CD4-positive, alpha-beta memory T cell (primary cell): ENCODE measurements at regions of chr19 and their contacts with region 1.

Region 1: DNA sequence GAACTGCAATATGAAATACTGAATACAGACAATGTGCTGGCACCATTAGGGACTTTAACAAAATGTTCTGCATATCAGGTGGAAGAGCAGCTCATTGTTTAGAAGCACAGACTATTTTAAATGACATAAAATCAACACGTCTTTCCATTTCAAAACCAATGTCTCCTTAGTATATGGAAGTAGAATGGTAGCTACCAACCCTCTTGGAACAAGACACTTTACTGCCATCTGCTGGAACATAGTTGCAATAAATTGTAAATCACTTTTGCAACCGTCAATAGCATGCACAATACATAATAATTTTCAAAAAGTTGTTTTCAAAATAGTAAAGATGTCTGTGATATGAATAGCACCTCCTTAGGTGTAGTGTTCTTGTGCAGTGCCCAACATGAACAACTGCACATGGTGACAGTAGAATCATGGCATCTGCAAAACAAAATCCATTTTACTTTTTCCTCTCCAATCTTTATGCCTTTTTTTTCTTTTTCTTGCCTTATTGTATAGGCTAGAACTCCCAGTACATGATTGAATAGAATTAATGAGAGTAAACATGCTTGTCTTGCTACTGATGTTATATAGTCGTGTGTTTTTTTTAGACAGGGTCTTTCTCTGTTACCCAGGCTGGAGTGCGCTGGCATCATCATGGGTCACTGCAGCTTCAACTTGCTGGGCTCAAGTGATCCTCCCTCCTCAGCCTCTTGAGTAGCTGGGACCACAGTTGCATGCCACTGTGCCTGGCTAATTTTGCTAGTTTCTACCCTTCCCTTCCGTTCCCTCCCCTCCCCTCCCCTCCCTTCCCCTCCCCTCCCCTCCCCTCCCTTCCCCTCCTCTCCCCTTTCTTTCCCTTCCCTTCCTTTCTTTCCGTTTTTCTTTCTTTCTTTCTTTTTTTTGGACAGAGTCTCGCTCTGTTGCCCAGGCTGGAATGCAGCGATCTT is 7.8 kb upstream of the LYPD5 start:
- DNase-seq: peak in 4 of 5 donors; percentile 49 to 58 (median 55)
- H3K4me3 ChIP-seq: no peak overlapping the region
- H3K4me3 Mint-ChIP-seq: no peak overlapping the region
- H3K27ac ChIP-seq: no peak overlapping the region
- H3K27ac Mint-ChIP-seq: no peak overlapping the region
- H3K4me1 ChIP-seq: peaks cover 14% of the 10 kb centered on the region
- H3K4me1 Mint-ChIP-seq: peaks cover 0 to 13% (median 3%) of the 10 kb centered on the region in 4 donors
- H3K27me3 ChIP-seq: no peaks in the 10 kb centered on the region
- H3K27me3 Mint-ChIP-seq: peaks cover 1 to 11% of the 10 kb centered on the region in 2 donors

Region 2: DNA sequence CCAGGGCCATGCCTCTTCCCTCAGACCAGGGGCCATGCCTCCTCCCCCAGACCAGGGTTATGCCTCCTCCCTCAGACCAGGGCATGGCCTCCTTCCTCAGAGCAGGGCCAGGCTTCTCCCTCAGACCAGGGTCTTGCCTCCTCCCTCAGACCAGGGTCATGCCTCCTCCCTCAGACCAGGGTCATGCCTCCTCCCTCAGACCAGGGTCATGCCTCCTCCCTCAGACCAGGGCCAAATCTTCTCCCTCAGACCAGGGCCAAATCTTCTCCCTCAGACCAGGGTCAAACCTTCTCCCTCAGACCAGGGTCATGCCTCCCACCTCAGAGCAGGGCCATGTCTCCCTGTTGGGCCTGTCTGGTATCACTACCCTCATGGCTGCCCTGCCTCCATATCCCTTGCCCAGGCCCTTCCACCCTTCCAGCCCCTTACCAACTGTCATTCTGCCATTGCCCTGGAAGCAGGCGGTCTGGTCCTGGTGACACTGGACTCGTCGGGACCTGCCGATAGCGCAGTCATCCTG is 11.9 kb before region 1 on chr19:
- CTCF ChIA-PET with region 1: interaction called, 10 read pairs
- POLR2A ChIA-PET with region 1: no interaction called
- intact Hi-C with region 1: no loop called
- DNase-seq: no peak
- H3K4me3 ChIP-seq: peak overlapping the region; percentile 44 to 60
- H3K4me3 Mint-ChIP-seq: peak overlapping the region; percentile 70 to 85 (median 78)
- H3K27ac ChIP-seq: peak overlapping the region; percentile 13
- H3K27ac Mint-ChIP-seq: peak overlapping the region in 2 of 7 donors; percentile 68 to 79
- H3K4me1 ChIP-seq: peaks cover 9% of the 10 kb centered on the region
- H3K4me1 Mint-ChIP-seq: peaks cover 4 to 18% (median 8%) of the 10 kb centered on the region in 4 donors
- H3K27me3 ChIP-seq: no peaks in the 10 kb centered on the region
- H3K27me3 Mint-ChIP-seq: no peaks in the 10 kb centered on the region